Activated T-helper 1 cell treated with anti-CD3 and anti-CD28 coated beads, Interleukin-12 subunit alpha, Interleukin-12 subunit beta, Interleukin-2, Interleukin-4 antibody, amounts not matched to agents 30 ng/mL and 10 ng/mL and 1 ng/mL, durations not matched to agents 14 hours and 24 hours and 36 hours (primary cell): ENCODE measurements at regions of chr5 and their contacts with region 1.

Region 1: DNA sequence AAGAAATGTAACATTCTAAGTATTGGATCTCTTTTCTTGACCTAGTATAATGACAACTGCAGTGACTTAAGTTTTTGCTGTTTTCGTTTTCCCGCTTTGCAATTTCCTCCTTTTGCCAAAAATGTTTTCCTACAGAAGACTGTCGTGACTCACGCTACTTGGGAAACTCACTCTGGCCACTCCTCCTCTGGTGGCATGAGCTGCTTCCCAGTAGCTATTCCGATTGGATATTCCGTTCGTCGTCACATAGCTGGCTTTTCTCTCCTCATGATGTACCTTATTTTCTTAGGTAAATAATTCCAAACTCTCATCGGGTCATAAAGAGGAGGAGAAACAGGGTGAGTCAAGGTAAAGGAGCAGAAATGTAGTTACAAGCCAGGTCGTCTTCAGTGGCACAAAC is 64.9 kb downstream of the GOLPH3 start:
- DNase-seq: no peak
- H3K4me3 Mint-ChIP-seq: no peak overlapping the region
- H3K27ac Mint-ChIP-seq: no peak overlapping the region
- H3K4me1 Mint-ChIP-seq: peaks cover 6% of the 10 kb centered on the region
- H3K27me3 Mint-ChIP-seq: no peaks in the 10 kb centered on the region

Region 2: DNA sequence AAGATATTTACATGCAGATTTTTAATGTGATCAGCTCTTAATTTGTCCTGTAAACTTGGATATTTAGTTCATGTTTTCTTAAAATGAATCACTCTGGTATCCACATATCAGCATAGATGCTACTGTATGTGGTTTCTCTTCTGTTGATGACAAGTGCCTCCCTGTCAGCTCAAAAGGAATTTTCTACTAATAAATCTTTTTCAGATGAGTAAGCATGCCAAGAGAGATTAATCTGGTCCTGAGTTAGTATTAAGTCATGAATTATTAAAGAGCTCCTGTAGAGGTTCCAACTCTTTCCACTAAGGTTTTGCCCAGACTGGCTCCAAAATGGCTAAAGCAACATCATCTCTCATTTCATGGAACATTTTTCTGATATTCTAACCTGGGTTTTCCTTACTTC is 64.3 kb before region 1 on chr5:
- intact Hi-C with region 1: no loop called
- DNase-seq: no peak
- H3K4me3 Mint-ChIP-seq: no peak overlapping the region
- H3K27ac Mint-ChIP-seq: no peak overlapping the region
- H3K4me1 Mint-ChIP-seq: no peaks in the 10 kb centered on the region
- H3K27me3 Mint-ChIP-seq: no peaks in the 10 kb centered on the region

Region 3: DNA sequence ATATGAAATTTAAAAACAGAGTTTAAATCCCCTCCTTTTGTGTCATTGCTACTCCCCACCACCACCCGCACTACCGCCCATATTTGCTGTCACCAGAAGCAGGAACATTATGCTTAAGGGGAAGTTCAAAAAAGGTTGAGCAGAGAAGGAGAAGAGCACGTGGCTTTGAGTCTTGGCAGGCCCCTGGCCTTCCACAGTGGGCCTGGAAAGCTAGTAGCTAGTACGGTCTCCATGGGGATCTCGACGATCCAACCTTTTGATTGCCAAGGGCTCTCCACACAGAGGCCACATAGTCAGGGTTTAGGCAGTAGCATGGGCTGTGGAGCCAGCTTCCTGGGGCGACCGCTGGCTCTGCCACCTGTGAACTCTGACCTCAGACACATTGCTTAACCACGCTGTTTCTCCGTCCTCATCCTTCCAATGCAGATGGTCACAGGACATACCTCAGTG is 25.2 kb before region 1 on chr5:
- intact Hi-C with region 1: no loop called
- DNase-seq: no peak
- H3K4me3 Mint-ChIP-seq: no peak overlapping the region
- H3K27ac Mint-ChIP-seq: no peak overlapping the region
- H3K4me1 Mint-ChIP-seq: no peaks in the 10 kb centered on the region
- H3K27me3 Mint-ChIP-seq: no peaks in the 10 kb centered on the region

Region 4: GRCh38 chr5:32329308-32329834 is 220.1 kb after region 1 on chr5:
- intact Hi-C with region 1: loop called (anchors 5 kb)
- DNase-seq: peak; percentile 40
- H3K4me3 Mint-ChIP-seq: no peak overlapping the region
- H3K27ac Mint-ChIP-seq: no peak overlapping the region
- H3K4me1 Mint-ChIP-seq: peaks cover 4% of the 10 kb centered on the region
- H3K27me3 Mint-ChIP-seq: no peaks in the 10 kb centered on the region

Region 5: GRCh38 chr5:32436553-32437242 is 327.5 kb after region 1 on chr5:
- intact Hi-C with region 1: no loop called
- DNase-seq: no peak
- H3K4me3 Mint-ChIP-seq: no peak overlapping the region
- H3K27ac Mint-ChIP-seq: no peak overlapping the region
- H3K4me1 Mint-ChIP-seq: peaks cover 18% of the 10 kb centered on the region
- H3K27me3 Mint-ChIP-seq: no peaks in the 10 kb centered on the region